Activated CD4-positive, alpha-beta T cell treated with anti-CD3 and anti-CD28 coated beads for 36 hours (primary cell): ENCODE measurements at regions of chr14 and their contacts with region 1.

Region 1: GRCh38 chr14:75307700-75308379 is 29.2 kb downstream of the FOS start:
- DNase-seq: peak; percentile 89
- ATAC-seq: peak; percentile 73
- H3K4me3 Mint-ChIP-seq: no peak overlapping the region
- H3K27ac Mint-ChIP-seq: no peak overlapping the region
- H3K4me1 Mint-ChIP-seq: peaks cover 14% of the 10 kb centered on the region
- H3K27me3 Mint-ChIP-seq: no peaks in the 10 kb centered on the region

Region 2: GRCh38 chr14:74647678-74648461 is 660.0 kb before region 1 on chr14:
- CTCF ChIA-PET with region 1: no interaction called
- POLR2A ChIA-PET with region 1: no interaction called
- intact Hi-C with region 1: no loop called
- DNase-seq: no peak
- ATAC-seq: no peak
- H3K4me3 Mint-ChIP-seq: no peak overlapping the region
- H3K27ac Mint-ChIP-seq: no peak overlapping the region
- H3K4me1 Mint-ChIP-seq: peaks cover 3% of the 10 kb centered on the region
- H3K27me3 Mint-ChIP-seq: no peaks in the 10 kb centered on the region

Region 3: GRCh38 chr14:74860906-74861733 is 446.7 kb before region 1 on chr14:
- CTCF ChIA-PET with region 1: interaction called, 3 read pairs
- POLR2A ChIA-PET with region 1: no interaction called
- intact Hi-C with region 1: loop called in 1 of 2 experiments (anchors 5 kb)
- DNase-seq: peak; percentile 96
- ATAC-seq: peak; percentile 93
- H3K4me3 Mint-ChIP-seq: no peak overlapping the region
- H3K27ac Mint-ChIP-seq: no peak overlapping the region
- H3K4me1 Mint-ChIP-seq: peaks cover 7% of the 10 kb centered on the region
- H3K27me3 Mint-ChIP-seq: no peaks in the 10 kb centered on the region

Region 4: DNA sequence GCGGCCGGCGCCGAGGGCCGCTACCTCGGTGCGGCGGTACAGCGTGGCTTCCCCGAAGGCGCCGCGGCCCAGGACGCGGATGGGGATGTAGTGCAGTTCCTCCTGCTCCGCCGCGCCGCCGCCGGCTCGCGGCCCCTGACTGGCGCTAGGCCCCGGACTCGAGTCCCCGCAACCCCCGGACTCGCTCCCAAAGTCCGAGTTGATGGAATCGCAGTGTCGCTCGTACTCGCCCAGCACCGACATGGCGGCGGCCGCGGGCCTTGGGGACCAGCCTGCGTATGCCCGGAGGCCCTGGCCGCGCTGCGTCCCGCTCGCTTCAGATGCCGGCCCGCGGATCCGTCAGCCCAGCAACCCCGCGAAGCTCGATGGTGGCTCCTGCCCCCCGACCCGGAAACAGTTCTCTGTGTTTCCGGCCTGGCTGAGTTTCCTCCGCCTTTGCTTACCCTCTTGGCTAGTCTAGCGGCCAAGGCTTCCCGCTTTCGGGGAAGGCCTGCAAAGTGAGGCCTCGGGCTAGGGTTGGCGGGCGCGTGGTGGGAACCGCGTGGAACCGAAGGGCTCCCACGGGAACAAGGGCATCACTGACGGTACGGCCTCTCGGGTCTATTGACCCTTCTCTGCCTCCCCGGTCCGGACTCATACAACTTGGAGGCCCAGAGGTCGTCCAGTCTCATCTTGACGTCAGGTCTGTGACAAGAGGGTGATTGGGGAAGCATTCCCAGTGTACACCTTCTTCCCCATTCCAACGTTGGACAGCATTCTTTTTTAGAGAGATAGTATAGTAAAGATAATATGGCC is 181.0 kb before region 1 on chr14 and contains the start of gene NEK9:
- CTCF ChIA-PET with region 1: interaction called, 15 read pairs
- POLR2A ChIA-PET with region 1: no interaction called
- intact Hi-C with region 1: loop called (anchors 1 kb)
- DNase-seq: peak; percentile 94
- ATAC-seq: peak; percentile 90
- H3K4me3 Mint-ChIP-seq: peak within 1 kb of the TSS; percentile 97
- H3K27ac Mint-ChIP-seq: peak within 1 kb of the TSS; percentile 98
- H3K4me1 Mint-ChIP-seq: peaks cover 41% of the 10 kb centered on the region
- H3K27me3 Mint-ChIP-seq: no peaks in the 10 kb centered on the region
- total RNA-seq, gene NEK9: 45.2 to 58.7 TPM

Region 5: GRCh38 chr14:75293920-75294642 is 13.8 kb before region 1 on chr14:
- CTCF ChIA-PET with region 1: interaction called, 13 read pairs
- POLR2A ChIA-PET with region 1: no interaction called
- intact Hi-C with region 1: no loop called
- DNase-seq: peak; percentile 97
- ATAC-seq: peak; percentile 96
- H3K4me3 Mint-ChIP-seq: peak overlapping the region; percentile 73
- H3K27ac Mint-ChIP-seq: peak overlapping the region; percentile 85
- H3K4me1 Mint-ChIP-seq: peaks cover 22% of the 10 kb centered on the region
- H3K27me3 Mint-ChIP-seq: peaks cover 3% of the 10 kb centered on the region

Region 6: DNA sequence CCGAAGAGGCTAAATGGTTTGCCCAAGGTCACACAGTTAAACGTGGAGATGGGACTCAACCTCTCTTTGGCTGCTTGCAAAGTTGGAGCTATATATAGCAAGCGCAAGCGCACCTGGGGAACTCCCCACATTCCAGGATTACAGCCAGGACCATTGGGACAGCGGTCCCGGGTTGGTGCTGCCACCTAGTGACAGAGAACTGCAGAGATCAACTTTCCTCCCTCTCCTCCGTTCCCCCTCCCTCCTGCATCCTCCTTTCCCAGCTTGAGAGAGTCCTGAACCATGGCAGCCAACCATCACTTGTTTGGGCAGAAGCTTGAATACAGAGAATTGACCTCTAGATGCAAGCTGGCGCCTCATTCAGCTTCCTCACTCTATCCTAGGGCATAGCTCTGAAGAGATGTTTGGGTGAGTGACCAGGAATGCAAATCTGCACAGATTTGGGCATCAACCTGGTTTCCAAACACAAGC is 253.2 kb after region 1 on chr14:
- CTCF ChIA-PET with region 1: interaction called, 10 read pairs
- POLR2A ChIA-PET with region 1: no interaction called
- intact Hi-C with region 1: loop called (anchors 2 kb)
- DNase-seq: peak; percentile 71
- ATAC-seq: no peak
- H3K4me3 Mint-ChIP-seq: peak overlapping the region; percentile 13
- H3K27ac Mint-ChIP-seq: peak overlapping the region; percentile 88
- H3K4me1 Mint-ChIP-seq: peaks cover 82% of the 10 kb centered on the region
- H3K27me3 Mint-ChIP-seq: no peaks in the 10 kb centered on the region

Region 7: GRCh38 chr14:75982266-75983018 is 674.6 kb after region 1 on chr14:
- CTCF ChIA-PET with region 1: no interaction called
- POLR2A ChIA-PET with region 1: no interaction called
- intact Hi-C with region 1: loop called in 1 of 2 experiments (anchors 10 kb)
- DNase-seq: peak; percentile 86
- ATAC-seq: peak; percentile 62
- H3K4me3 Mint-ChIP-seq: peak overlapping the region; percentile 67
- H3K27ac Mint-ChIP-seq: peak overlapping the region; percentile 78
- H3K4me1 Mint-ChIP-seq: peaks cover 42% of the 10 kb centered on the region
- H3K27me3 Mint-ChIP-seq: no peaks in the 10 kb centered on the region